Right cardiac atrium (tissue), 5 donors: ENCODE measurements at regions of chr1 and their contacts with region 1.

Region 1: DNA sequence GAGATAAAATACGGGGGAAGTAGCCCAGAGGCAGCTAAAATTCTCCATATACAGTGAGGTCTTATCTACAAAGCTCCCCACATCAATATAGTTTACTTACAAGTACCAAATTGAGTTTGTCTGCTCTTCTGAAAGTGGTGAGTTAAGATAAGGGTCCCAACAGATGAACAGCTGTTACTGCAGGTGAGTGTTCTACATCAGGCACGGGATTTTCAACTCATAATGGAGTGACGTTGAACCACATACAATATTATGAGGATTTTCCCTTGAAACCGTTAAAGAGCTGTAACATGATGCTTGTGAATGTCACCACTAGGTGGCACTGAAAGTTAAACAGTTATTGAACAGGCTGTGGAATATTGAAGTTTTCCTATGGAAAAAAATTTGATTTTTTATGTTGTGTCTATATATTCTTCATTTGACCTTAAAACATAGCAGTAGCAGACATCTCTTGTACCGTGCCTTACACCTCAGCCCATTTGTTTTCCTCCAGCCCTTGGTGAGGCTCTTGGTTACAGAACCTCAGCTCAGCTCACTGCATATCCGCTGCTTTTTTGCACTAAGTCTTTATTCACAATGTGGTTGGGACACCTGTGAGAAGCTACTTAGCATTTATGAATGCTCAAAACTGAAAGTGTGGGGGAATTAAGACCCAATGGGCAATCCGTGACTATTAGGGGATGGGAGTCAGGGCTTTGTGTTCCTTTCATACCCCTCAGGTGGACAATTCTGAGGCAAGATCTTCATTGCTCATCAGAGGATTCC is 23.2 kb downstream of the CD1D start:
- DNase-seq: no peak
- ATAC-seq: peak; percentile 60 to 87
- H3K4me3 ChIP-seq: no peak overlapping the region
- H3K27ac ChIP-seq: no peak overlapping the region
- H3K4me1 ChIP-seq: no peaks in the 10 kb centered on the region
- H3K27me3 ChIP-seq: no peaks in the 10 kb centered on the region

Region 2: GRCh38 chr1:157209514-157209913 is 994.4 kb before region 1 on chr1:
- intact Hi-C with region 1: no loop called
- DNase-seq: no peak
- ATAC-seq: no peak
- H3K4me3 ChIP-seq: no peak overlapping the region
- H3K27ac ChIP-seq: no peak overlapping the region
- H3K4me1 ChIP-seq: peaks cover 1% of the 10 kb centered on the region
- H3K27me3 ChIP-seq: no peaks in the 10 kb centered on the region

Region 3: DNA sequence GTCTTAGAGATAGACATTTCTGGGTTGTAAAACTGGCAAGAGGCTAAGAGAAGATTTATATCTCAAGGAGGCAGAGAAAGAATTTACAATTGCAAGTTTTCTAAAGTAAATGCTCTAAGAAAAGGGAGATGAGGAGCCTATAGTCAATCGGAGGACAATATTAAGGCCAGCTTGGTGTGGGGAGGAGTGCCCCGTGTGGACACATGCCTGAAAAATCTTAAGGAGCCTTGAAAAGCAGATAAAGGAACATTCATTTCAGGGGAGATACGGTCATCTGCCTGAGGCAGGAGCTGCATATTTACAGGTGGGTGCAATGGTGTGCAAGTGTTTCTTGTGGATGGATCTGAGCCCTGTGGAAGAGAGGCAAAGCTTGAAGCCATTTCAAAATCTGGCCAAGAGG is 452.6 kb before region 1 on chr1:
- intact Hi-C with region 1: no loop called
- DNase-seq: no peak
- ATAC-seq: no peak
- H3K4me3 ChIP-seq: no peak overlapping the region
- H3K27ac ChIP-seq: no peak overlapping the region
- H3K4me1 ChIP-seq: no peaks in the 10 kb centered on the region
- H3K27me3 ChIP-seq: no peaks in the 10 kb centered on the region

Region 4: GRCh38 chr1:158124999-158125398 is 78.9 kb before region 1 on chr1:
- intact Hi-C with region 1: no loop called
- DNase-seq: peak; percentile 82 to 95 (median 88)
- ATAC-seq: peak; percentile 98
- H3K4me3 ChIP-seq: no peak overlapping the region
- H3K27ac ChIP-seq: no peak overlapping the region
- H3K4me1 ChIP-seq: no peaks in the 10 kb centered on the region
- H3K27me3 ChIP-seq: no peaks in the 10 kb centered on the region

Region 5: GRCh38 chr1:158248771-158249170 is 44.9 kb after region 1 on chr1:
- intact Hi-C with region 1: no loop called
- DNase-seq: no peak
- ATAC-seq: no peak
- H3K4me3 ChIP-seq: no peak overlapping the region
- H3K27ac ChIP-seq: no peak overlapping the region
- H3K4me1 ChIP-seq: no peaks in the 10 kb centered on the region
- H3K27me3 ChIP-seq: no peaks in the 10 kb centered on the region

Region 6: GRCh38 chr1:159071970-159072582 is 868.2 kb after region 1 on chr1:
- intact Hi-C with region 1: loop called in 3 of 4 experiments (anchors 5 to 10 kb)
- DNase-seq: no peak
- ATAC-seq: peak; percentile 60 to 66
- H3K4me3 ChIP-seq: no peak overlapping the region
- H3K27ac ChIP-seq: no peak overlapping the region
- H3K4me1 ChIP-seq: no peaks in the 10 kb centered on the region
- H3K27me3 ChIP-seq: no peaks in the 10 kb centered on the region